H1 (cell line): ENCODE measurements at regions of chr20 and their contacts with region 1.

Region 1: GRCh38 chr20:22974353-22974752 is 60.8 kb upstream of the SSTR4 start:
- DNase-seq: peak in 1 of 2 experiments; percentile 54
- H3K4me3 ChIP-seq: no peak overlapping the region
- H3K27ac ChIP-seq: no peak overlapping the region
- H3K4me1 ChIP-seq: no peaks in the 10 kb centered on the region
- H3K27me3 ChIP-seq: no peaks in the 10 kb centered on the region; a peak in 1 of 7 replicates
- CTCF ChIP-seq: peak; percentile 51 to 69 (median 59)
- EP300 ChIP-seq: no peak
- POLR2A ChIP-seq: no peak
- RAD21 ChIP-seq: peak; percentile 58 to 70

Region 2: GRCh38 chr20:22962557-22963438 is 11.6 kb before region 1 on chr20:
- CTCF ChIA-PET with region 1: interaction called, 40 read pairs
- POLR2A ChIA-PET with region 1: no interaction called
- DNase-seq: no peak
- H3K4me3 ChIP-seq: no peak overlapping the region
- H3K27ac ChIP-seq: no peak overlapping the region
- H3K4me1 ChIP-seq: no peaks in the 10 kb centered on the region
- H3K27me3 ChIP-seq: no peaks in the 10 kb centered on the region
- CTCF ChIP-seq: no peak
- EP300 ChIP-seq: no peak
- POLR2A ChIP-seq: no peak
- RAD21 ChIP-seq: no peak

Region 3: DNA sequence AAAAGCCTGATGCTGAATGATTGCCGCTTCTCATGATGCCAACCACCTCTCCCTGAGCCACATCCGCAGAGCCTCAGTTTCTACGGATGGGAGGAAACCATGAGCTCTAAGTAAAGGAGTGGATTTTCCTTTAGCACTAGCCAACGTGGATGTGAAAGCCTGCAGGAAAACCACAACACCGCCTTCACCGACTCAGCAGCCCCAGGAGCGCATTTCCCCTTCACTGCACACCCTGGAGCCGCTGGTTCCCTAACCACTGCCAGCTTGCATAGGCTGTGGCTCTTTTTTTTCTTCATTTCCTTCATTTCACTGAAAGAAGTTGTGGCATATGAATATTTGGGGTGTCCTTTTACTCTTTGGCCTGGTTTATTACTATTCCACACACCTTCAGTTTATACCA is 10.3 kb after region 1 on chr20:
- CTCF ChIA-PET with region 1: interaction called, 24 read pairs
- POLR2A ChIA-PET with region 1: no interaction called
- DNase-seq: no peak
- H3K4me3 ChIP-seq: no peak overlapping the region
- H3K27ac ChIP-seq: no peak overlapping the region
- H3K4me1 ChIP-seq: no peaks in the 10 kb centered on the region
- H3K27me3 ChIP-seq: no peaks in the 10 kb centered on the region
- CTCF ChIP-seq: no peak
- EP300 ChIP-seq: no peak
- POLR2A ChIP-seq: no peak
- RAD21 ChIP-seq: no peak